HepG2 (cell line): ENCODE measurements at regions of chr13 and their contacts with region 1.

Region 1: GRCh38 chr13:35039012-35039411 is 96.9 kb downstream of the NBEA start:
- DNase-seq: no peak
- ATAC-seq: no peak
- H3K4me3 ChIP-seq: no peak overlapping the region
- H3K27ac ChIP-seq: no peak overlapping the region
- H3K4me1 ChIP-seq: no peaks in the 10 kb centered on the region
- H3K27me3 ChIP-seq: no peaks in the 10 kb centered on the region
- CTCF ChIP-seq: no peak
- EP300 ChIP-seq: no peak
- POLR2A ChIP-seq: no peak
- RAD21 ChIP-seq: no peak

Region 2: GRCh38 chr13:35057858-35058257 is 18.8 kb after region 1 on chr13:
- CTCF ChIA-PET with region 1: no interaction called
- POLR2A ChIA-PET with region 1: no interaction called
- in situ Hi-C with region 1: no loop called
- intact Hi-C with region 1: loop called (anchors 1 kb)
- DNase-seq: no peak
- ATAC-seq: no peak
- H3K4me3 ChIP-seq: no peak overlapping the region
- H3K27ac ChIP-seq: no peak overlapping the region
- H3K4me1 ChIP-seq: no peaks in the 10 kb centered on the region
- H3K27me3 ChIP-seq: no peaks in the 10 kb centered on the region; a peak in 1 of 5 replicates
- CTCF ChIP-seq: no peak
- EP300 ChIP-seq: no peak
- POLR2A ChIP-seq: no peak
- RAD21 ChIP-seq: no peak